Aorta (tissue), 5 donors: ENCODE measurements at regions of chr9 and their contacts with region 1.

Region 1: GRCh38 chr9:109745335-109746283 is 34.4 kb upstream of the PALM2AKAP2 start:
- DNase-seq: peak; percentile 76 to 88
- ATAC-seq: peak; percentile 91
- H3K4me3 ChIP-seq: peak overlapping the region in 1 of 2 donors; percentile 10
- H3K27ac ChIP-seq: peak overlapping the region; percentile 43 to 60
- H3K4me1 ChIP-seq: peaks cover 12 to 15% of the 10 kb centered on the region in 2 donors
- H3K27me3 ChIP-seq: no peaks in the 10 kb centered on the region

Region 2: GRCh38 chr9:109766336-109766735 is 20.7 kb after region 1 on chr9:
- intact Hi-C with region 1: loop called in 1 of 2 experiments (anchors 1 kb)
- DNase-seq: no peak
- ATAC-seq: no peak
- H3K4me3 ChIP-seq: no peak overlapping the region
- H3K27ac ChIP-seq: no peak overlapping the region
- H3K4me1 ChIP-seq: peaks cover 7 to 8% of the 10 kb centered on the region in 2 donors
- H3K27me3 ChIP-seq: no peaks in the 10 kb centered on the region